Cardiac septum (tissue), 1 donor: ENCODE measurements at regions of chr19 and their contacts with region 1.

Region 1: DNA sequence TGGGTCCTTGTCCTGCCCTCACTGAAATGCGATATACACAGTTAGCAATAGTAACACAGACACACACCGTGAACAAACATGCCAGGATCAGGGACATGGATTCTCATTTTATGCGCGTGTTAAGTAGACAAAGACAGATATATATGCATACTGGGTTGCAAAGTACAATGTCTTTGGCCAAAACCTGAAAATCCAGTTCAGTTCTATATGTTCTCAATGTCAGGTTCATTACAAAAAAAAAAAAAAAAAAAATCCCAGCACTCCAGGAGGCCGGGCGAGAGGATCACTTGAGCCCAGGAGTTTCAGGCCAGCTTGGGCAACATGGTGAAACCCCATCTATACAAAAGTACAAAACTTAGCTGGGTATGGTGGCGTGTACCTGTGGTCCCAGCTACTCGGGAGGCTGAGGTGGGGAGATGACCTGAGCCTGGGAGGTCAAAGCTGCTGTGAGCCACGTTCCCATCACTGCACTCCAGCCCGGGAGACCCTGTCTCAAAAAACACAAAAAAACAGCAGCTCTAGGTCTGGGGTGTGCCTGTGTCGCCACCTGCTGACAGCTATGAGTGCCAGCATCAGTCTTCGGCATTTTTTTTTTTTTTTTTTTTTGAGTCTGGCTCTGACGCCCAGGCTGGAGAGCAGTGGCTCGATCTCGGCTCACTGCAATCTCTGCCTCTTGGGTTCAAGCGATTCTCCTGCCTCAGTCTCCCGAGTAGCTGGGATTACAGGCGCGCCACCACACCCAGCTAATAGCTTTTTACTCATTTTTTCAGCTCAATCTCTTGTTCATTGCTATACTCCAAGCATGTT is 10.3 kb downstream of the AP2S1 start:
- DNase-seq: no peak

Region 2: DNA sequence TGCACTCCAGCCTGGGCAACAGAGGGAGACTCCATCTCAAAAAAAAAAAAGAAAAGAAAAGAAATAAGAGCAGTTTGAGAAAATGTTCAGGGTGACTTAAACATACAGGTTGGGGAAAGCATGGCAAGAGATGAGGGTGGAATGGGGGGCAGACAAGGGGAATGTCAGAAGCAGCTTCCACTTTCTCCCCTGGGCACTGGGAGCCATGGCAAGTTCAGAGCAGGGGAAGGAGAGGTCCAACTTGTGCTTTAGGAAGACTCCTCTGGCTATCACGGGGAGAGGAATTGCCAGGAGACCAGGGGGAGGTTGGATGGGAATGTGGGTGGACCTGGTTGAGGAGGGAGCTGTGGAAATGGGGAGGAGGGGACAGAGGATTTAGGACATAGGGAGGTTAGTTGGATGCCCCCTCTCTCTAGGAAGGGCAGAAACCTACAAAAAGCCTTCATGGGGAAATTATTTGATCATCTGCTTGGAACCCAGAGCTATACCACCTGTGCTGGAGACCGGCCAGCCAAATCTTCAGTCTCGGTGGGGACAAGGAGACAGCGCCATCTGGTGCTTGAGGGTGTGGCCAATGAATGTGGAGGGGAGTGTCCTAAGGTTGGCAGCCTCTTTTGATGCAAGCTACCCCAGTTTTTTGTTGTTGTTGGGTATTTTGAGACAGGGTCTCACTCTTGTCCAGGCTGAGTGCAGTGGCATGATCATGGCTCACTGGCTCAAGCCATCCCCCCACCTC is 86.8 kb before region 1 on chr19:
- intact Hi-C with region 1: loop called (anchors 1 kb)
- DNase-seq: peak; percentile 84

Region 3: GRCh38 chr19:46772170-46773017 is 67.9 kb before region 1 on chr19:
- intact Hi-C with region 1: no loop called
- DNase-seq: no peak

Region 4: GRCh38 chr19:46821498-46822409 is 18.6 kb before region 1 on chr19:
- intact Hi-C with region 1: no loop called
- DNase-seq: no peak

Region 5: GRCh38 chr19:46990991-46991676 is 150.8 kb after region 1 on chr19:
- intact Hi-C with region 1: no loop called
- DNase-seq: peak; percentile 90